ENCODE measurements at regions of chr14 and their contacts with region 1.

Region 1: GRCh38 chr14:20682435-20683124 is 1.8 kb upstream of the RNASE4 start:
- DNase-seq: peak; percentile 88
- ATAC-seq: peak; percentile 68
- H3K4me3 Mint-ChIP-seq: no peak overlapping the region
- H3K27ac Mint-ChIP-seq: no peak overlapping the region
- H3K4me1 Mint-ChIP-seq: peaks cover 30% of the 10 kb centered on the region
- H3K27me3 Mint-ChIP-seq: no peaks in the 10 kb centered on the region

Region 2: DNA sequence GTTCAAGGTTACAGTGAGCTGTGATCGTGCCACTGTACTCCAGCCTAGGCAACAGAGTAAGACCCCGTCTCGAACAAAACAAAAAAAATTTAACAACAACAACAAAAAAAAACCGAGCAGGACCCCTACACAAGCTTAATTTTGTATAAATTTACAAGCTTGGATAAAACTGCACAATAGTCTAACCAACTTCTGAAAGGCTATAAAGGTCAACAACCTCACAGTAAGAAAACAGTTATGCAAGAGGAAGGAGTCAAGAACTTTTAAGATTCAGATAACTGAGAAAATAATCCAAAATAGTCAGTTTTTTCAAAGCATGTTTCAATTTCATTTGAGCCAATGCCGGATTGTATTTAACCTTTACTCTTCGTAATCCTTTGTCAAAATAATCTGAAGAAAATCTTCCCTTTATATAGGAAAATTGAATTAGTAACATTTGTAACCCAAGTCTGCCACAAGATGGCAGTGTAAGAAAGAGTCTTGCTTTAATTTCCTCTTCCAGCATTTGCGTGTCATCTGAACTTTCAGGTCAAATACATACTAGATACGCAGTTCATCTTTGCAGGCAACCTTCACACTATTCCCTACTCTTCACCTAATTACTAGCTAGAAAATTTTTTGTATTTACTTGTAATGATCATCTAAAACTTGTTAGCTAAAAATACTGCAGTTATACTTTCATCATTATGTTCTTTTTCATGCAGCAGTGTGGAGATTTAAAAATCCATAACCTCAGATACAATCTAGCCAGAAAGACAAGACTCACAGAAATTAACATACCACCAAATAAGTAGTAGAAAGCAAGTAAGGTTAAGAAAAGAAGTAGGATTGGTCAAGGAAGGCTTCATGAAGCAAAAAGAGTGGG is 355.3 kb before region 1 on chr14:
- CTCF ChIA-PET with region 1: interaction called, 10 read pairs
- POLR2A ChIA-PET with region 1: no interaction called
- intact Hi-C with region 1: loop called in 1 of 2 experiments (anchors 2 kb)
- DNase-seq: no peak
- ATAC-seq: peak; percentile 71
- H3K4me3 Mint-ChIP-seq: no peak overlapping the region
- H3K27ac Mint-ChIP-seq: peak overlapping the region; percentile 44
- H3K4me1 Mint-ChIP-seq: peaks cover 37% of the 10 kb centered on the region
- H3K27me3 Mint-ChIP-seq: no peaks in the 10 kb centered on the region

Region 3: DNA sequence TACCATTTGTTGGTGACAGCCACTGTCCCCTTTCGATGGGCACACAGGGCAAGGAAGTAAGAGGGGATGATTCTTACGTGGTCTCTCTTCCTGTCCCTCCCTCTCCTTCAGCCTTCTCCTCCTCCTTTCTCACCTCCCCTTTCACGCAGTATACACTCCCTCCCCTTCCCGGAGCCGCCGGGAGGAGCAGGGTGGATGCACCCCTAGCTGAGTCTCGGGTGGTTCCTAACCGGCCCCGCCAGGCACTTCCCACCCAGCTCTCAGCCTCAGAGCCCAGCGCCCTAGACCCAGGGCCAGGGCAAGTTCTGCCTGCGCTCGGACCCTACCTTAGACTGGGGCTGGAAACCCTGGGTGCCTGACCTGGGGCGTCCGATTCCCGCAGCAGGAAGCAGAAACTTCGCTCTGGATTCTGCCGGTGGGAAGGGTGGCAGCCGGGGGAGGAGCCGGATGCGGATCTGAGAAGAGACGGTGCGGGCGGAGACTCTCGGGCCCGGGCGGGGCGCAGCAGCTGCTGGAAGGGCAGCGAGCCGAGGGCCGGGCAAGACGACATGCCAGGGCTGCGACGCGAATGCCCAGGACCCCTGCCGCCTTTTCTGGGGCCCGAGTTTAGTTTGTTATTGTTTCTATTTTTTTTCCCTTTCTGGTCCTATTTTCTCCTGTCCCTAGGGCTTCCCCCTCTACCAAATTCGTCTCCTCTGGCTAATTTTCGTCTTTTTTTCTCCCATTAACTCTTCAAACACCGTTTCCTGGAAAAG is 269.4 kb before region 1 on chr14 and contains the start of gene TEP1:
- CTCF ChIA-PET with region 1: interaction called, 3 read pairs
- POLR2A ChIA-PET with region 1: interaction called, 3 read pairs
- intact Hi-C with region 1: loop called (anchors 1 to 5 kb)
- DNase-seq: peak; percentile 87
- ATAC-seq: peak; percentile 82
- H3K4me3 Mint-ChIP-seq: peak within 1 kb of the TSS; percentile 82
- H3K27ac Mint-ChIP-seq: peak within 1 kb of the TSS; percentile 94
- H3K4me1 Mint-ChIP-seq: peaks cover 37% of the 10 kb centered on the region
- H3K27me3 Mint-ChIP-seq: no peaks in the 10 kb centered on the region
- total RNA-seq, gene TEP1: 29.2 to 40.1 TPM

Region 4: DNA sequence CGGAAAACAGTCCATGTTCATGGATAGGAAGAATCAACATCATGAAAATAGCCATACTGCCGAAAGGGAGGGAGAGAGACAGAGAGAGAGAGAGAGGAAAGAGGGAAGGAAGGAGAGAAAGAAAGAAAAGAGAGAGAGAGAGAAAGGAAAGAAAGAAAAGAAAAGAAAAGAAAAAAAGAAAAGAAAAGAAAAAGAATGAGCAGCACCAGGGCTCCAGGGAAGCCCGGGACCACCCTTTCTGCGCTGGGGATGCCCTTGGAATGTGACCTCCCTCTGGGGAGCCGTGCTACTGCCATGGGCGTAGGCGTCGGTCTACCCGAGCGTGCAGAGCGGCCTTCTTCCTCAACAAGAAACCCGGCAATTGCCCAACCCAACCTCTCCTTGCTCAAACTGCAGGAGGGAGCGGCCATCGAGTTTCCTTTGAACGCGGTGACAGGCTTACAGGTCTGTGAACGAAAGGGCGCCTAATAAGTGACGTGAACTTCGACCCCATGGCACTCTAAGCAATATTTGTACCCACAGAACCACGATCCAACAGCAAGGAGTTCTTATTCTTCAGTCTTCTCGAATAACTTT is 58.0 kb before region 1 on chr14:
- CTCF ChIA-PET with region 1: interaction called, 5 read pairs
- POLR2A ChIA-PET with region 1: no interaction called
- intact Hi-C with region 1: loop called in 1 of 2 experiments (anchors 1 kb)
- DNase-seq: peak; percentile 67
- ATAC-seq: peak; percentile 34
- H3K4me3 Mint-ChIP-seq: peak overlapping the region; percentile 71
- H3K27ac Mint-ChIP-seq: peak overlapping the region; percentile 84
- H3K4me1 Mint-ChIP-seq: peaks cover 68% of the 10 kb centered on the region
- H3K27me3 Mint-ChIP-seq: peaks cover 31% of the 10 kb centered on the region

Region 5: GRCh38 chr14:20662968-20663732 is 19.4 kb before region 1 on chr14:
- CTCF ChIA-PET with region 1: interaction called, 31 read pairs
- POLR2A ChIA-PET with region 1: interaction called, 8 read pairs
- intact Hi-C with region 1: loop called (anchors 1 kb)
- DNase-seq: peak; percentile 93
- ATAC-seq: peak; percentile 88
- H3K4me3 Mint-ChIP-seq: peak overlapping the region; percentile 72
- H3K27ac Mint-ChIP-seq: peak overlapping the region; percentile 40
- H3K4me1 Mint-ChIP-seq: peaks cover 22% of the 10 kb centered on the region
- H3K27me3 Mint-ChIP-seq: peaks cover 2% of the 10 kb centered on the region

Region 6: DNA sequence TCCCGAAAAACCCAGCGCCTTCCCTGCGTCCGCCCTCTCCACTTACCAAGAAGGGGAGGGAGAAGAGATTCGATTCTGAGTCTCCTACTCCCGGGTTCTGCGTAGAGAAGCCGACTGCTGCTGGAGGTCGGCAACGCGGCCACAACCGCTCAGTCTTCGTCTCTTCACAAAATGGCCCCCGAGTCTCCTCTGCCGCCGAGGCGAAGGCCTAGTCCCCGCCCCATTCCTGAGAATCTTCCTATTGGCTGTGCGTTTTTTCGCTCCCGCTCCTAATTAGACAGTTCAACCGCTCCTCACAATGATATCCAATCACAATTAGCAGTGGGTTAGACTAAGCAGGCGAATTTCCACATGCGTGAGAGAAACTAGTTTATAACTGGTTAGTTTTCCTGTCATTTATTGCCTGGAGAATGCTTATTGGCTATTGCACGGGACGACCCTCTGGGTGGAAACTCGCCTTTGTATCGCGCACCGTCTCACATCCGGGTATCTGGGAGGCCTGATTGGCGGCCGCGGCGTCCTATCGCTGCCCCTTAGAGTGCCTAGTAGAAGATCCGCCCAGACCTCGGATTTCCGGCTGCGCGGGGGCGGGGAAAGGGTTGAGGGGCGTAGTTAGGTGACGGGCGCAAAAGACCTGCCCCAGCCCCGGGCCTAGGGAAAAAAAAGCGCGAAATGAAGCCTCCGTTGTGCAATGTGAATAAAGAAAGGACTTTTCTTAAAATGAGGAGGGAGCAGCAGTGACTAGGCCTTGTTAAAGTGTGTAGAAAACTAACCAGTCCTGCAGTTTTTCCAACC is 586.9 kb after region 1 on chr14 and contains the start of gene HNRNPC:
- CTCF ChIA-PET with region 1: no interaction called
- POLR2A ChIA-PET with region 1: no interaction called
- intact Hi-C with region 1: loop called in 1 of 2 experiments (anchors 10 kb)
- DNase-seq: peak; percentile 100
- ATAC-seq: peak; percentile 89
- H3K4me3 Mint-ChIP-seq: peak within 1 kb of the TSS; percentile 93
- H3K27ac Mint-ChIP-seq: peak within 1 kb of the TSS; percentile 100
- H3K4me1 Mint-ChIP-seq: peaks cover 25% of the 10 kb centered on the region
- H3K27me3 Mint-ChIP-seq: no peaks in the 10 kb centered on the region
- total RNA-seq, gene HNRNPC: 1,155 to 1,665 TPM

Region 7: GRCh38 chr14:21317398-21317797 is 634.8 kb after region 1 on chr14:
- CTCF ChIA-PET with region 1: no interaction called
- POLR2A ChIA-PET with region 1: no interaction called
- intact Hi-C with region 1: no loop called
- DNase-seq: no peak
- ATAC-seq: no peak
- H3K4me3 Mint-ChIP-seq: no peak overlapping the region
- H3K27ac Mint-ChIP-seq: no peak overlapping the region
- H3K4me1 Mint-ChIP-seq: peaks cover 7% of the 10 kb centered on the region
- H3K27me3 Mint-ChIP-seq: no peaks in the 10 kb centered on the region

Region 8: DNA sequence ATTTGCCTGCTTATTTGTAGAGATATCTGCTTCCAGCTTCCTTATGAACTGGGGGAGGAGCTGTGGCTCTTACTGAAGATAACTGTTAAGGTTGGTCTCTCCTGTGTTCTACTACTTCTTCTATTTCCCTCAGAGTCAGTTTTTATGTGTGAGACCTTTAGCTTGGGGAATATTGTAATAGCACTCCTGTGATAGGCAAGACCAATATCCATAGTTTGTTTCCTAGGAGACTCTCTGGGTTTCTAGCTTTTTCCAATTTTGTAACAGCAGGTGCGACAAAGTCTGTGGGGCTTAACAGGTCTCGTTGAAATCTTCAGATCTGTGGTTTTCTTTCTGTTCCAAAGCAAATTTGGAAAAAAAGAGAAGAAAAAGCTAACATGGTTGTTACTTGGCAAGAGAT is 897.4 kb after region 1 on chr14 and contains the start of gene OR10G3:
- CTCF ChIA-PET with region 1: no interaction called
- POLR2A ChIA-PET with region 1: no interaction called
- intact Hi-C with region 1: no loop called
- DNase-seq: no peak
- ATAC-seq: no peak
- H3K4me3 Mint-ChIP-seq: no peak within 1 kb of the TSS
- H3K27ac Mint-ChIP-seq: no peak within 1 kb of the TSS
- H3K4me1 Mint-ChIP-seq: no peaks in the 10 kb centered on the region
- H3K27me3 Mint-ChIP-seq: peaks cover 2% of the 10 kb centered on the region
- total RNA-seq, gene OR10G3: not detected